ENCODE measurements at regions of chr15 and their contacts with region 1.

Region 1: DNA sequence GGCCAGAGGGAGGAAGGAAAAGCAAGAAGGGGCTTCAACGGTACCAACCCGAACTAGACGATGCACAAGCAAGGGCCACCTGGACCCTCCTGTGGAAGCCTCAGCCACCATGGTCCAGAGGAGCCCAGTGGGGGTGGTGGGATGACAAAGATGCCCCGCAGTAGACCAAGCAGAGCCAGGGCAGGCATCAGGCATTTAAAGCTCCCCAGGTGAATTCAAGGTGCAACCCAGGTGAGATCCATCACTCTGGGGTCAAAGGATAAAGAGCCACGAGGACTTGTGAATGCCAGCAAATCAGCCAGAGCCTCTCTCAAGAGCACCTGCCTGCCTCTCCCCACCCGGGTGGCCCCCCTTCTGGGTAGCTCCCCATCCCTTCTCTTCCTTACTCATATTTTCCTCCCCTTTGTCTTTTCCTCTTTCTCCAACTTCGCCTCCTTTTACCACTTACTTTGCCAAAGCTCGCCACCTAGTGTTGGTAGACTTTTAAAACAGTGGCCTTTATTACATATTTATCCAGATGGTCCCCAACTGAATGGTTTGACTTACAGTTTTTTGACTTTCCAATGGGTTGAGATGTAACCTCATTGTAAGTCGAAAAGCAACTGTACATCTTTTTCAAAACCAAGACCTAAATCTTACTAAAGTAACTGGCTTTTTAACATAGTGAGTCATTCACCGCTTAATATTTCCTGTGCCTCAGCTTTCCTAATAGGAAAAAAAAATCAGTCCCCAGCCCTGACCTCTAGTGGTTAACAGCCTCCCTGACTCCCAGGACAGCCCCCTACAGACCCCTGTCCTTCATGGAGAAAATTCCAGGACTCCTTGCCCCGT is 18.8 kb downstream of the PLA2G4F start:
- DNase-seq: no peak
- ATAC-seq: peak in 1 of 2 donors; percentile 14
- H3K4me3 ChIP-seq: no peak overlapping the region
- H3K27ac ChIP-seq: no peak overlapping the region
- H3K4me1 ChIP-seq: no peaks in the 10 kb centered on the region
- H3K27me3 ChIP-seq: no peaks in the 10 kb centered on the region

Region 2: GRCh38 chr15:41989259-41989933 is 148.2 kb before region 1 on chr15:
- intact Hi-C with region 1: loop called in 2 of 4 experiments (anchors 5 to 10 kb)
- DNase-seq: peak; percentile 77 to 94 (median 93)
- ATAC-seq: peak; percentile 87 to 88
- H3K4me3 ChIP-seq: no peak overlapping the region
- H3K27ac ChIP-seq: no peak overlapping the region
- H3K4me1 ChIP-seq: no peaks in the 10 kb centered on the region
- H3K27me3 ChIP-seq: no peaks in the 10 kb centered on the region

Region 3: GRCh38 chr15:42065033-42065432 is 72.6 kb before region 1 on chr15:
- intact Hi-C with region 1: loop called in 3 of 4 experiments (anchors 5 kb)
- DNase-seq: peak in 1 of 3 donors; percentile 47
- ATAC-seq: peak in 1 of 2 donors; percentile 30
- H3K4me3 ChIP-seq: no peak overlapping the region
- H3K27ac ChIP-seq: no peak overlapping the region
- H3K4me1 ChIP-seq: no peaks in the 10 kb centered on the region
- H3K27me3 ChIP-seq: no peaks in the 10 kb centered on the region

Region 4: DNA sequence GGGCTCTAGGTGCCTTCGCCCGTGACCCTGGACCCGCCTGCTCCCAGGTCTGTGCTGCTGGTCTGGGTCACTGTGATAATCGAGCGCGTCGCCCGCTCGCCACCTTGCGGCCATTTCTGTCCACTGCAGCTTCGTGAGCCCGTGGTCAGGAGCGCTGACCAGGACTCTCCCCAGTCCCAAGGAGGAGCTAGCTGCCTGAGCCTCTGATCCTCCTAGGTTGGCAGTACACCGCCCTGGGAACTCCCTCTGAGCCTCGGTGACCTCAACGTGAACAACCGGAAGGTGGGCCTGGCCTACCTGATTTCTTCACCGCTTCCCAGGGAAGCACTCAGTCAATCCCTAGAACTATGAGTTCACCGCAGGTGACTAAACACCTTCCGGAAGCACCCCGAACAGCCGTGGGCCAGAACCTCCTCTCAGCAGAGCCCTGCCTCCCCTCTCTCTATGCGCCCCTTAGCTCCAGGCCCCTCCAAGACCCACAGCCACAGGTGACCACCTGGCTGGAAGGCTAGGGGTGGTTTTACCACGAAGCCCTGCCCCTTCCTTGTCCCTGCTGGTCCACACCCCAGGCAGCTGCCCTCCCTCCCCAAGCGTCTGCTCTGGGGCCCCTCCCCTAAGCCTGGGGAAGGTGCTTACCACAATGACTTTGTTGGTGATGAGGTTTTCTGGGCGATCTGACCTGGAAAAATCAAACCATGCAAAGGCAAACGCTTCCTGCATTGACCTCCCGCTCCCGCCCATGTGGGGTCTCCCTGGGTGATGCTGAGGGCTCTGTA is 53.0 kb before region 1 on chr15:
- intact Hi-C with region 1: loop called in 1 of 4 experiments (anchors 10 kb)
- DNase-seq: peak; percentile 61 to 83 (median 83)
- ATAC-seq: peak; percentile 76 to 88
- H3K4me3 ChIP-seq: no peak overlapping the region
- H3K27ac ChIP-seq: no peak overlapping the region
- H3K4me1 ChIP-seq: no peaks in the 10 kb centered on the region
- H3K27me3 ChIP-seq: no peaks in the 10 kb centered on the region

Measured in right cardiac atrium (tissue), 5 donors.